ENCODE measurements at regions of chr14 and their contacts with region 1.

Region 1: GRCh38 chr14:39102969-39103957 is at the start of gene SEC23A:
- DNase-seq: peak; percentile 63 to 85 (median 76)
- ATAC-seq: peak; percentile 98
- H3K4me3 ChIP-seq: peak within 1 kb of the TSS; percentile 87
- H3K4me3 Mint-ChIP-seq: peak within 1 kb of the TSS; percentile 72 to 99 (median 94)
- H3K27ac ChIP-seq: peak within 1 kb of the TSS; percentile 98
- H3K27ac Mint-ChIP-seq: peak within 1 kb of the TSS; percentile 95 to 99 (median 97)
- H3K4me1 ChIP-seq: peaks cover 9 to 10% of the 10 kb centered on the region in 2 donors
- H3K4me1 Mint-ChIP-seq: peaks cover 24 to 52% (median 44%) of the 10 kb centered on the region in 7 donors
- H3K27me3 ChIP-seq: no peaks in the 10 kb centered on the region
- H3K27me3 Mint-ChIP-seq: no peaks in the 10 kb centered on the region
- total RNA-seq, gene SEC23A: 51.3 to 75.3 (median 68.9) TPM

Region 2: DNA sequence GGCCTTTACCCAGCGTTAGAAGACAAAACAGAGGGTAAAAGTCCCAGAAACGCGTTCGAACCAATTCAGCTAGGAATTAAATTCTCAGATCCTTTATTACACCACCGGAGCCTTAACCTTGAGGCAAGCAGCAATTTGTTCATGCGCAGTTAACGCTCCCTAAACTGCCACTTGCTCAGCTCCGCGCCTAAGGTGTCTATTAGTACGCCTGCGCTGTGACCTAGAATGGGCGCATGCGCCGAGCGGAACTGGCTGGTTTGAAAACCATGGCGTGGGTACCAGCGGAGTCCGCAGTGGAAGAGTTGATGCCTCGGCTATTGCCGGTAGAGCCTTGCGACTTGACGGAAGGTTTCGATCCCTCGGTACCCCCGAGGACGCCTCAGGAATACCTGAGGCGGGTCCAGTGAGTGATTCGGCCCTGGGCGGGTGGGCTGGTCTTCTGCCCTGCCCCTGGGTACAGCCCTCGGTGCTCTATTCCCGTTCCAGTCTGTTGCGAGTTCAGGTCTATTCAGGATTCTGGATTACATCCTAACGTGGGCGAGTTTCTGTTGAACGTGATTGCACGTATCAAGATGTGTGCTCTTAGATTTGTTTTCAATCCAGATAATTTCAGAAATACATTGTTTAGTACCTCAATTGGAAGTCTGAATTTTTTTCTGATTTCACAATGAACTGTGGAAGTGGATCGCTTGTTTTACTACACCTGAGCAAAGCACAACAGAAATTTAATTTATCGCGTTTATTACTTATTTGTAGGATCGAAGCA is 11.0 kb after region 1 on chr14 and contains the start of gene GEMIN2:
- CTCF ChIA-PET with region 1: interaction called, 6 read pairs
- POLR2A ChIA-PET with region 1: interaction called, 54 read pairs
- intact Hi-C with region 1: loop called (anchors 1 kb)
- DNase-seq: peak; percentile 88 to 95 (median 92)
- ATAC-seq: peak; percentile 99
- H3K4me3 ChIP-seq: peak within 1 kb of the TSS; percentile 68
- H3K4me3 Mint-ChIP-seq: peak within 1 kb of the TSS; percentile 89 to 99 (median 97)
- H3K27ac ChIP-seq: peak within 1 kb of the TSS; percentile 80
- H3K27ac Mint-ChIP-seq: peak within 1 kb of the TSS; percentile 81 to 98 (median 94)
- H3K4me1 ChIP-seq: peaks cover 12 to 13% of the 10 kb centered on the region in 2 donors
- H3K4me1 Mint-ChIP-seq: peaks cover 10 to 36% (median 24%) of the 10 kb centered on the region in 7 donors
- H3K27me3 ChIP-seq: no peaks in the 10 kb centered on the region
- H3K27me3 Mint-ChIP-seq: peaks cover 0 to 3% (median 0%) of the 10 kb centered on the region in 5 donors
- total RNA-seq, gene GEMIN2: 7.2 to 20.9 (median 18.6) TPM

Region 3: GRCh38 chr14:39174560-39175444 is 71.5 kb after region 1 on chr14 and contains the start of gene PNN:
- CTCF ChIA-PET with region 1: no interaction called
- POLR2A ChIA-PET with region 1: interaction called, 30 read pairs
- intact Hi-C with region 1: loop called (anchors 1 kb)
- DNase-seq: peak; percentile 83 to 99 (median 98)
- ATAC-seq: peak; percentile 94
- H3K4me3 ChIP-seq: peak within 1 kb of the TSS; percentile 80
- H3K4me3 Mint-ChIP-seq: peak within 1 kb of the TSS; percentile 95 to 100 (median 99)
- H3K27ac ChIP-seq: peak within 1 kb of the TSS; percentile 90
- H3K27ac Mint-ChIP-seq: peak within 1 kb of the TSS; percentile 96 to 100 (median 99)
- H3K4me1 ChIP-seq: peaks cover 16 to 28% of the 10 kb centered on the region in 2 donors
- H3K4me1 Mint-ChIP-seq: peaks cover 27 to 74% (median 50%) of the 10 kb centered on the region in 7 donors
- H3K27me3 ChIP-seq: no peaks in the 10 kb centered on the region
- H3K27me3 Mint-ChIP-seq: no peaks in the 10 kb centered on the region
- total RNA-seq, gene PNN: 80.1 to 120 (median 102) TPM

Region 4: DNA sequence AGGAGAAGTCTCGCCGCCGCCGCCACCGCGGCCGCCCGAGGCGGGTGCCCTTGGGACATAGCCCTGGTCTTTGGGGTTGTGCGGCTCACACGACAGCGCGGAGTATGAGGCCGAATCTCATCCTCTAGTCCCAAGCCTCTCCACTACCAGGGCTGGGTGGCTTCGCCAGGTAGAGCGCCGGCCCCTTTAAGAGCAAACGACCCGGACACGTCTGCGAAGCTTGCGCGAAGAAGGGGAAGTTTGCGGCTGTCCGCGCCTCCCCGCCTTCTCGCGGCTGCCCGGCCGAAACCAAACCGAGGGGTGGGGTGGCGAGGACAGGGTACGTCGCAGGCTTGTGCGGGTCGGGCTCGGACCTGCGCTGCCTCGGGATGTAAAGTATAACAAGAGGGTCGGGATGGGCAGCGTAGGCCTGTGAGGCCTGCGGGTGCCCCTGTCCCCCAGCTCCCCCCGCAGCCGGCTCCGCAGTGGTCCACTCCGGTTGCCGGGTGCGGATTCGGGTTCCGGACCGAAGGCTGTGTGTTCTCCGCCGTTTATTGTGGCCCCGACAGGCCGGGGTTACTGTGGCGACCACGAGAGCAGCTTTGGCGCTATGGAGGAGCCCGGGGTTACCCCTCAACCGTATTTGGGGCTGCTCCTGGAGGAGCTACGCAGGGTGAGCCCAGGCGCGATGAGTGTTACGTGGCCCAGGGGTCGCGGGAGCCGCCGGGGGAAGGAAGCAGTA is 163.8 kb after region 1 on chr14:
- CTCF ChIA-PET with region 1: no interaction called
- POLR2A ChIA-PET with region 1: interaction called, 5 read pairs
- intact Hi-C with region 1: loop called (anchors 1 to 2 kb)
- DNase-seq: peak; percentile 65 to 77 (median 71)
- ATAC-seq: peak; percentile 87
- H3K4me3 ChIP-seq: peak overlapping the region; percentile 86
- H3K4me3 Mint-ChIP-seq: peak overlapping the region; percentile 76 to 100 (median 95)
- H3K27ac ChIP-seq: peak overlapping the region; percentile 94
- H3K27ac Mint-ChIP-seq: peak overlapping the region; percentile 88 to 98 (median 96)
- H3K4me1 ChIP-seq: peaks cover 17 to 29% of the 10 kb centered on the region in 2 donors
- H3K4me1 Mint-ChIP-seq: peaks cover 47 to 62% (median 58%) of the 10 kb centered on the region in 7 donors
- H3K27me3 ChIP-seq: no peaks in the 10 kb centered on the region
- H3K27me3 Mint-ChIP-seq: no peaks in the 10 kb centered on the region

Region 5: GRCh38 chr14:39322807-39323206 is 219.5 kb after region 1 on chr14:
- CTCF ChIA-PET with region 1: no interaction called
- POLR2A ChIA-PET with region 1: no interaction called
- intact Hi-C with region 1: no loop called
- DNase-seq: no peak
- ATAC-seq: no peak
- H3K4me3 ChIP-seq: no peak overlapping the region
- H3K4me3 Mint-ChIP-seq: no peak overlapping the region
- H3K27ac ChIP-seq: no peak overlapping the region
- H3K27ac Mint-ChIP-seq: peak overlapping the region in 2 of 9 donors; percentile 20 to 33
- H3K4me1 ChIP-seq: no peaks in the 10 kb centered on the region
- H3K4me1 Mint-ChIP-seq: peaks cover 0 to 7% (median 0%) of the 10 kb centered on the region in 7 donors
- H3K27me3 ChIP-seq: no peaks in the 10 kb centered on the region
- H3K27me3 Mint-ChIP-seq: no peaks in the 10 kb centered on the region

Region 6: DNA sequence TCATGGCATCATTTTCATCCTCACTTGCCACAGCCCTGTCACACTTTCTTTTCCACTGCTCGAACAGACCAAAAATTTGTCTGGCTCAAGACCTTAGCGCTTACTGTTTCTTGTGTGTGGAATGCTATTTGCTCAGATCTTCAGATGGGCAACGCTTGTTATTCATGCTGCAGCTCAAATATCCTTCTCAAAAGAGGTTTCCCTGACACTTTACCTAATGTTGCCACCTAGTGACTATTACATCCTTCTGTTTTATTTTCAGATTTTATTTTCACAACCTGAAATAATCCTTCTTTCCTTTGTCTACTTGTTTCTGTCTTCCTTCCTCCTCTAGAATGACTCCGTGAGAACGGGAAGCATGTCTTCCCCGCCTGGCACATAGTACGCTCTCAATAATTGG is 323.3 kb after region 1 on chr14:
- CTCF ChIA-PET with region 1: interaction called, 3 read pairs
- POLR2A ChIA-PET with region 1: interaction called, 36 read pairs
- intact Hi-C with region 1: loop called (anchors 1 kb)
- DNase-seq: peak in 2 of 9 donors; percentile 22 to 25
- ATAC-seq: peak; percentile 34
- H3K4me3 ChIP-seq: no peak overlapping the region
- H3K4me3 Mint-ChIP-seq: peak overlapping the region; percentile 0 to 100 (median 58)
- H3K27ac ChIP-seq: no peak overlapping the region
- H3K27ac Mint-ChIP-seq: peak overlapping the region in 4 of 9 donors; percentile 9 to 76 (median 48)
- H3K4me1 ChIP-seq: peaks cover 31 to 52% of the 10 kb centered on the region in 2 donors
- H3K4me1 Mint-ChIP-seq: peaks cover 55 to 94% (median 84%) of the 10 kb centered on the region in 7 donors
- H3K27me3 ChIP-seq: no peaks in the 10 kb centered on the region
- H3K27me3 Mint-ChIP-seq: no peaks in the 10 kb centered on the region

Measured in naive thymus-derived CD4-positive, alpha-beta T cell (primary cell).